ENCODE measurements at regions of chr6 and their contacts with region 1.

Region 1: DNA sequence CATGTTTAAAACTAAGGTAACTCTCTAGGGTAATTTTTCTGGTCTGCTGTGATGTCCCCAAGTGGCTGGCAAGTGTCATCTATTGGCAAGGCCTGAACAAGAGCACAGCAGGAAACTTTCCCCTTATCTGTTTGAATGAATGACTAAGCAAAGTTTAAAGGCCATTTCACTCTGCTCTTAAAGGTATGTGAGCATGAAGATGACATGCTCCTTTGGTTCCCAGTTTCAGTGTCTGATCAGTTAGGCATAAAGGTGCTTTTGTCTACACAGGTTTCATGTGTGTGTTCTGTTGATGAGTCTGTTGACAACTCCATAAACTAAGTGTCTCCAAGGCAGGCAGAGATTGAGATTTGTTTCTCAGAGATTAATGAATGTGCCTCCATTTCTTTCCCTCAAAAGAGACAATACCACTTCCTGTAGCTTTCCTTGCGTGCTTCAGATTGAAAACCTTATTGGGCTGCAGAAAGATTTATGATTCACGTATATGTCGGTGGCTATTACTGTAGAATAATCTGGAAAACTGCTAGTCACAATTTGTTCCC is 83.9 kb downstream of the MAP3K7 start:
- DNase-seq: no peak

Region 2: GRCh38 chr6:90315354-90315950 is 187.5 kb before region 1 on chr6:
- intact Hi-C with region 1: no loop called
- DNase-seq: no peak

Region 3: GRCh38 chr6:90516074-90516660 is 13.2 kb after region 1 on chr6:
- intact Hi-C with region 1: no loop called
- DNase-seq: no peak

Region 4: DNA sequence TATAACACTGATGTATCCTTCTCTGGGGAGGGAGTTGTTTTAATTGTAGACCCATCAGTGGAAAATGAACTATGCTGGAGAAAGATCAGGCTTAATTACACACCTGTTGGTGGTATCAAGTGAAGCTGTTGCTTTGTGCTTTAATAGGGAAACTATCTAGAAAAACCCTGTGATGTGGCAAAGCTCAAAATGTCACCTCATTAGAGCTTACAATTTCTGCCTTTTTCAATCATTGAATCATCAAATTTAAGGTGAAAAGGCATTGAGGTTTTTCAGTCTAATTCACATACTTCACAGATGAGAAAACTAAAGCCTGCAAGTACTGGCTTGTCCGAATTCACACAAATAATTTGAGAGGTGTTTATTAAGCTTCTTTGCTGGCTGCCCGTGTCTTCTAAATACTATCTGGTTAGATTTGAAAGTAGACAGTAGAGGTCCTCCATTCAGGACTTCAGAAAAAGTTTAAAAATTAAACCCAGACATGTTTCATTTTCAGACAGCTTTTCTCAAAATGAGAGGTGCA is 227.3 kb after region 1 on chr6:
- intact Hi-C with region 1: no loop called
- DNase-seq: no peak

Region 5: GRCh38 chr6:91718198-91718597 is 1215.3 kb after region 1 on chr6:
- intact Hi-C with region 1: loop called in 1 of 2 experiments (anchors 5 kb)
- DNase-seq: no peak

Measured in posterior vena cava (tissue), 2 donors.